Sigmoid colon (tissue), 7 donors: ENCODE measurements at regions of chr9 and their contacts with region 1.

Region 1: DNA sequence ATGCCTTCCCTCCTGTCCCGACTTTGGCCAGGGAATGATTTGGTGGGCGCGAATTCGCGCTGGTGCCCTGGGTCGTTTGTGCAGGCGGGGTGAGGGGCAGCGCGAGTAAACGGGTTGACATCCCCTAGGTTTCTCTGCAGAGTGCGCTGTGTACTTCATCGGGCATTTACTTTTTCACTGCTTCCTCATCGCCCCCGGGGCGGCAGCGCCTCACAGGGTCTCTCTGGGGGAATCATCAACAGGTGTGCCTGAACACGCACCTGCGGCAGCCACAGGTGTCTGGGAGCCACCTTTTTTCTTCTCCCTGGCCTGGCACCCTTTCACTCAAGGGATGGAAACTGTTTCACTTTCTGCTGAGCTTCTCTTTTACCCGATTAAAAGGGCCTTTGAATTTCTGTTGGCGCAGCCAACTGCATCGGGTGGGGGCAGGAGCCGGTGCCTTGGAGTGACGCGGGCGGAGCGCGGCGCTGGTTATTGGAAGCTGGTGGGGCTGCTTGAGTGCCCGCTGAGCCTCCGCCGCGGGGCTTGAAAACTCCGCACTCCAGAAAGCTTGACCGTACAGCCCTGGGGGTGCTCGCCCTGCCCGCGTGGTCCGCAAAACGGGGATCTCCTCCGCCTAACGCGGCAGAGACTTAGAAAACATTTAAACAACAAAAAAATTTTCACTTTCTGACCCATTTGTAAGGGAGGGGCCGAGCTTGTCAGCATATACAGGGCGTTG is 52.1 kb upstream of the TJP2 start:
- DNase-seq: peak; percentile 74
- H3K4me3 ChIP-seq: peak overlapping the region; percentile 38 to 73 (median 62)
- H3K27ac ChIP-seq: peak overlapping the region; percentile 24 to 76 (median 50)
- H3K4me1 ChIP-seq: peaks cover 0 to 22% (median 17%) of the 10 kb centered on the region in 4 donors
- H3K27me3 ChIP-seq: no peaks in the 10 kb centered on the region
- CTCF ChIP-seq: no peak
- EP300 ChIP-seq: no peak
- POLR2A ChIP-seq: no peak

Region 2: GRCh38 chr9:69180670-69181069 is 58.7 kb after region 1 on chr9:
- intact Hi-C with region 1: loop called (anchors 10 kb)
- DNase-seq: no peak
- H3K4me3 ChIP-seq: no peak overlapping the region
- H3K27ac ChIP-seq: peak overlapping the region in 2 of 4 donors; percentile 0 to 80
- H3K4me1 ChIP-seq: peaks cover 0 to 28% (median 27%) of the 10 kb centered on the region in 4 donors
- H3K27me3 ChIP-seq: no peaks in the 10 kb centered on the region
- CTCF ChIP-seq: no peak
- EP300 ChIP-seq: no peak
- POLR2A ChIP-seq: no peak